ENCODE measurements at regions of chr1 and their contacts with region 1.

Region 1: GRCh38 chr1:51636764-51637522 is 20.1 kb downstream of the OSBPL9 start:
- DNase-seq: peak; percentile 96
- H3K4me3 ChIP-seq: no peak overlapping the region
- H3K27ac ChIP-seq: peak overlapping the region; percentile 63
- H3K4me1 ChIP-seq: peaks cover 34% of the 10 kb centered on the region
- H3K27me3 ChIP-seq: no peaks in the 10 kb centered on the region
- CTCF ChIP-seq: no peak

Region 2: DNA sequence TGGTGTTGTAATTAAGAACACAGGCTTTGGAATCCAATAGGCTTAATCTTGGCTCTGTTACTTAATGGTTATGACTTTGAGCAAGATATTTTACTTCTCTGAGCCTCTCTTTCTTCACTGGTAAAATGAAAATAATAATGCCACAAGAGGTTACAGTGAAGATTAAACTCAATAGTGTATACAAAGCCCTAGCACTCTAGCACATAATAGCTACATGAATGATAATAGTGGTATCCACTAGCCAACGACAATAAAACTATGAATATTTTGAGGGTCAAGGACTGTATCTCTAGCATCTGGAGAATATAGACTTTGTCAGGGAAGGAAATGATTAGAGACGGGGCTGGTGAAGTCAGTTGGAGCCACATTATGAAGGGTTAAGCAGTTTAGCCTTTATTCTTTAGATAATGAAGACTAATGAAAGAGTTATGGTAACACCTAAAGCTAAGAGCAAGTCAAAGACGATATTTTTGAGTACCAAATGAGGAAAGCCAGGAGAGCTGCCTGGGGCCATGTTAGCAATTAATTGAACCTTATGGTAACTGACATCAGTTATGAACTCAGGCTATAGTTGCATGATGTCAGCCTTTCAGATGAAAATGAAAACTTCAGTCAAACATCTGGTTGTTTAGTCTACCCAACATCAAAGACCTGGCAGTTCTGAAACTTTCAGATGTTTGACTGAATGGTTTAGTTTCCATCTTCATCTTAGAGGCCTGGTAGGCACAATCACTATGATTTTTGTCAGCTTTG is 433.6 kb before region 1 on chr1:
- CTCF ChIA-PET with region 1: no interaction called
- dilution Hi-C with region 1: no loop called
- in situ Hi-C with region 1: no loop called
- intact Hi-C with region 1: no loop called
- DNase-seq: no peak
- H3K4me3 ChIP-seq: no peak overlapping the region
- H3K27ac ChIP-seq: no peak overlapping the region
- H3K4me1 ChIP-seq: no peaks in the 10 kb centered on the region
- H3K27me3 ChIP-seq: no peaks in the 10 kb centered on the region
- CTCF ChIP-seq: no peak

Region 3: GRCh38 chr1:51690285-51690961 is 53.5 kb after region 1 on chr1:
- CTCF ChIA-PET with region 1: no interaction called
- dilution Hi-C with region 1: no loop called
- in situ Hi-C with region 1: no loop called
- intact Hi-C with region 1: loop called (anchors 5 kb)
- DNase-seq: peak; percentile 92
- H3K4me3 ChIP-seq: peak overlapping the region in 2 of 3 experiments; percentile 14 to 21
- H3K27ac ChIP-seq: peak overlapping the region; percentile 99
- H3K4me1 ChIP-seq: peaks cover 61% of the 10 kb centered on the region
- H3K27me3 ChIP-seq: no peaks in the 10 kb centered on the region
- CTCF ChIP-seq: no peak

Region 4: GRCh38 chr1:51750218-51750617 is 113.3 kb after region 1 on chr1:
- CTCF ChIA-PET with region 1: no interaction called
- dilution Hi-C with region 1: no loop called
- in situ Hi-C with region 1: loop called in 1 of 2 experiments (anchors 10 kb)
- intact Hi-C with region 1: no loop called
- DNase-seq: no peak
- H3K4me3 ChIP-seq: no peak overlapping the region
- H3K27ac ChIP-seq: no peak overlapping the region
- H3K4me1 ChIP-seq: peaks cover 9% of the 10 kb centered on the region
- H3K27me3 ChIP-seq: no peaks in the 10 kb centered on the region
- CTCF ChIP-seq: no peak